ENCODE measurements at regions of chr17 and their contacts with region 1.

Region 1: DNA sequence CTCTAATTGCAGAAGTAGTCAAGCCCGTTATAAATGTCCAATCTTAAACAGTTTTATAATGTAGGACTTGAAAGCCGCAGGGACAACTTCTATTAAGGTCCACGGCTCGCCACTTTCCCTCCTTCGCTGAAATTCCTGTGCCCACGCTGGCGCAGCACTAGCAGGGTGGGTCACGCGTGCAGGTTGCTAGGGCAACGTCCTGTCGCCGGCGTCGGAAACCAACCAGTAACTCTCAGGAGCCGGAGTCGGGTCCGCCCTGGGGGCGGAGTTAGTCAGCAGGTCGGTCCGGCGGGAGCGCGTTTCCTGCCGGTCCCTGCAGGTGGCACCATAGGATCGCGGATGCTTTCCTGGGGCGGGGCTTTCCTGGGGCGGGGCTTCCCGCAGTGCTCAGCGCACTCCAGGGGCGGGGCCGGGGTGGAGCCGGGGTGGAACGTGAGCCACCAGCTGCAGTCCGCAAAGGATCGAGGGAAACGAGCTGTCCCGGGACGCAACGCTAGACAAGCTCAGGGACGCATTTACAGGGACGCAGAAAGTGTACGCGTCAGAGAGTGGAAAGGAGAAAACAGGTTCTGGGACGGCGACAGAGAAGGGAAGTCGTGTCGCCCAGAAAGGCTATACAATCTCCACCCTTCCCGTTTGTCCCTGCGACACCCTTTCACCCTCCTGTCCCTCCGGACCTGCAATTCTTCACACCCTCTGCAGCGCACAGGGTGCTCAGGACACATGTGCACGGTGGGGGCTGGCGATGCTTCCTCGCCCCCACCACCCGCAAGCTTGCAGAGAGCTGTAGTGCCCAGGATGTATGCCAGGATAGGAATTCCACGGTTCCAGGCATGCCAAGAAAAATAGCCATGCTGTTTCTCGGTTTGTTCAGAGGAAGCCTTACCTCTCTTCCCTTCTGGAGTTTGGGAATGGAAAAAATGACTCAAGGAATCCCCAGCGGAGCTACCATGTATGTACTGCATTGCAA is 12.4 kb downstream of the COPZ2 start:
- DNase-seq: peak; percentile 98 to 99
- H3K4me3 ChIP-seq: peak overlapping the region; percentile 47 to 57
- H3K27ac ChIP-seq: peak overlapping the region; percentile 70 to 78
- H3K4me1 ChIP-seq: peaks cover 0 to 42% (median 36%) of the 10 kb centered on the region in 4 donors
- H3K27me3 ChIP-seq: peaks cover 0 to 10% of the 10 kb centered on the region in 2 donors
- CTCF ChIP-seq: peak; percentile 84 to 87

Region 2: DNA sequence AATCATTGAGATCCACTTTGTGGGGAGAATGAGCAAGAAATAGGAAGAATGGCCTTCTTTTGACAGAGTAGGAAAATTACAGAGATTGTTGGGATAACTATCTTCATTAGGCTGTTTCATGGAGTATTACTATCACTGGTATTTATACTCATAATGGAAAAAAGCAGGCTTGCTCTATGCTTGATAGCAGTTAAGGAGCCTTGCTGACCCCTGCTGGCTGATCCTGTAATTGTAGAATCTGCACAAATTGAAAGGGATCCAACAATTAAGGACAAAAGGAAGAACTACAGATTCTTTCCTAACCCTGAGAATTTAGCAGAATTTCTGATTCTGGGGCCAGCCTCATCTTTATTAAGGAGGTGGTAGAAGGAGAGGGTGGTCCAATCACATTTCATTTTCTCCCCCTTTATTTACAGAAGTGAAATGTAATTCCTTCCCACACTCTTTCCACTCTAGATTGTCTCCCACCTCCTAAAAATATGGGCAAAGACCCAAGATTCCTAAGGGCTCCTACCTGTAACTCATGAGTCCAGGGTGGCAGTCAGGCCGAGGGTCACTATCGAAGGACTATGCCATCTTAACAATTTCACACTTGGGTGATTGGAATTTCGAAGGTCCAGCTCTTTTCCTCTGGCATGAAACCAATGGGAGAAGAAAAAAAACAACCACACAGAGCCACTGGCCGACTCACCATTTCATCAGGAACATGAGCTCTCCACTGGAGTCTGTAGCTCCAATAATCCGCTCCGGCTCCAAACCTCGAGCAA is 49.3 kb after region 1 on chr17:
- intact Hi-C with region 1: loop called (anchors 1 kb)
- DNase-seq: peak; percentile 79 to 91
- H3K4me3 ChIP-seq: no peak overlapping the region
- H3K27ac ChIP-seq: peak overlapping the region; percentile 1 to 30
- H3K4me1 ChIP-seq: peaks cover 0 to 5% (median 0%) of the 10 kb centered on the region in 4 donors
- H3K27me3 ChIP-seq: no peaks in the 10 kb centered on the region
- CTCF ChIP-seq: peak; percentile 83 to 94

Region 3: GRCh38 chr17:48131216-48131824 is 106.1 kb after region 1 on chr17:
- intact Hi-C with region 1: loop called (anchors 2 kb)
- DNase-seq: peak in 1 of 2 donors; percentile 58
- H3K4me3 ChIP-seq: no peak overlapping the region
- H3K27ac ChIP-seq: no peak overlapping the region
- H3K4me1 ChIP-seq: peaks cover 0 to 6% (median 0%) of the 10 kb centered on the region in 4 donors
- H3K27me3 ChIP-seq: no peaks in the 10 kb centered on the region
- CTCF ChIP-seq: peak; percentile 82 to 89

Region 4: GRCh38 chr17:48618256-48618897 is 593.2 kb after region 1 on chr17:
- intact Hi-C with region 1: loop called (anchors 5 kb)
- DNase-seq: peak; percentile 81 to 90
- H3K4me3 ChIP-seq: no peak overlapping the region
- H3K27ac ChIP-seq: no peak overlapping the region
- H3K4me1 ChIP-seq: peaks cover 0 to 25% (median 17%) of the 10 kb centered on the region in 4 donors
- H3K27me3 ChIP-seq: peaks cover 0 to 100% of the 10 kb centered on the region in 2 donors
- CTCF ChIP-seq: peak; percentile 98 to 99

Measured in tibial artery (tissue), 4 donors.